Endothelial cell of umbilical vein (primary cell): ENCODE measurements at regions of chr1 and their contacts with region 1.

Region 1: GRCh38 chr1:52002038-52002917 is 11.8 kb upstream of the RAB3B start:
- DNase-seq: peak; percentile 89
- H3K4me3 ChIP-seq: no peak overlapping the region
- H3K27ac ChIP-seq: no peak overlapping the region
- H3K4me1 ChIP-seq: no peaks in the 10 kb centered on the region
- H3K27me3 ChIP-seq: peaks cover under 1 to 3% of the 10 kb centered on the region in 2 experiments
- CTCF ChIP-seq: peak; percentile 82 to 91
- POLR2A ChIP-seq: no peak

Region 2: GRCh38 chr1:51627678-51628077 is 374.6 kb before region 1 on chr1:
- CTCF ChIA-PET with region 1: no interaction called
- POLR2A ChIA-PET with region 1: no interaction called
- dilution Hi-C with region 1: no loop called
- intact Hi-C with region 1: loop called (anchors 1 kb)
- DNase-seq: peak; percentile 65
- H3K4me3 ChIP-seq: no peak overlapping the region
- H3K27ac ChIP-seq: no peak overlapping the region
- H3K4me1 ChIP-seq: no peaks in the 10 kb centered on the region
- H3K27me3 ChIP-seq: no peaks in the 10 kb centered on the region
- CTCF ChIP-seq: peak; percentile 30 to 35
- POLR2A ChIP-seq: no peak

Region 3: DNA sequence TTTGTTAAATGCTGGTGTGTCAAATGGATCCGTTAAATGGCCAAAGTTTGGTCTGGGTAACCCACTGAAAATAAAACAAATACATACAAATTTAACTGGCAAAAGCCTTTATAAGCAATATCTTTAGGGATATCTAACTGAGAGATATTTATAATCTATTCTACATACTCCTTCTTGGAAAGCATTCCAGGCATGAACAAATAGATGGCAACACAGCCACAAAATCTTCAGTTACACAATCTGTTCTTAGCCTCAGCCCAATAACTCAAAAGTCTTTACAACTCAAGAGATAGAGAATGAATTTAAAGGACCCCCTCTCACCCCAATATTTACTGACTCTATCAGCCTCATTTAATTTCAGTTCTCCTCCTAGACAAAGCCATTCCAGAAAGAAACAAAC is 182.5 kb before region 1 on chr1:
- CTCF ChIA-PET with region 1: no interaction called
- POLR2A ChIA-PET with region 1: no interaction called
- dilution Hi-C with region 1: no loop called
- intact Hi-C with region 1: loop called (anchors 10 kb)
- DNase-seq: no peak
- H3K4me3 ChIP-seq: no peak overlapping the region
- H3K27ac ChIP-seq: no peak overlapping the region
- H3K4me1 ChIP-seq: no peaks in the 10 kb centered on the region
- H3K27me3 ChIP-seq: no peaks in the 10 kb centered on the region
- CTCF ChIP-seq: no peak
- POLR2A ChIP-seq: no peak

Region 4: DNA sequence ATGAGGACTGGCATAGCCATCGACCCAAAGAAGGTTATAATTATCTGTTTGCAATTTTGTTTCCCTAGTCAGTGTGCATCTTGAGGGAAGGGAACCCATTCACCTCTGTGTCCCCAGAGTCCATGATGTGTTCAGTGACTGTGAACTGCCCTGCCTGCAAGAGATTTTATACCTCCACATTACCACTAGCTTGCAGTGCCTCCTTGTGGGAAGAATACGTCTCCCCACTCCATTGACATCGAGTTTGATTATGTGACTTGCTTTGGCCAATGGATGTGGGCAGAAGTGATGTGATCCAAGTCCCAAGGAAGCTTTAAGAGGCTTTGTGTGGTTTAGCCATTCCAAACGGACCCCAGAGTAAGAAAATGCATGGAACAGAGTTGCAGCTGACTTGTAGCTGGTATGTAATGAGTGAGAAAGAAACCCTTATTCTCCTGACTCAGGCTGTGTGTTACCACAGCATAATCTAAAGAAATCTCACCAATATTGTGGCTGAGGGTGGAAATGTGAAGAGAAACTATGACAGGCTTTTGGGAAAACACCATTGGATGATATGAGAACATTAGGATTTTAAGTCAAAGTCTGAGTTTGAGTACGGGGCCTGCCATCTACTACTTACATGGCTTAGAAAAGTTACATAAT is 76.0 kb before region 1 on chr1:
- CTCF ChIA-PET with region 1: interaction called, 3 read pairs
- POLR2A ChIA-PET with region 1: interaction called, 3 read pairs
- dilution Hi-C with region 1: no loop called
- intact Hi-C with region 1: loop called (anchors 1 kb)
- DNase-seq: peak; percentile 52
- H3K4me3 ChIP-seq: no peak overlapping the region
- H3K27ac ChIP-seq: no peak overlapping the region
- H3K4me1 ChIP-seq: no peaks in the 10 kb centered on the region
- H3K27me3 ChIP-seq: no peaks in the 10 kb centered on the region
- CTCF ChIP-seq: peak; percentile 37 to 53
- POLR2A ChIP-seq: no peak

Region 5: DNA sequence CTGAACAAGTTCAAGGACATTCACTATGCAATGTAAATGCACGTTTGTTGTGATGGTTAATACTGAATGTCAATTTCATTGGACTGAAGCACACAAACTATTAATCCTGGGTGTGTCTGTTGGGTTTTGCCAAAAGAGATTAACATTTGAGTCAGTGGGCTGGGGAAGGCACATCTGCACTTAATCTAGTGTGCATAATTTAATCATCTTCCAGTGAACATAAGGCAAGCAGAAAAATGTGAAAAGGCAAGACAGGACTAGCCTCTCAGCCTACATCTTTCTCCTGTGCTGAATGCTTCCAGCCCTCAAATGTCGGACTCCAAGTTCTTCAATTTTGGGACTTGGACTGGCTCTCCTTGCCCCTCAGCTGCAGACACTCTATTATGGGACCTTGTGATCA is 442.2 kb after region 1 on chr1:
- CTCF ChIA-PET with region 1: no interaction called
- POLR2A ChIA-PET with region 1: no interaction called
- dilution Hi-C with region 1: no loop called
- intact Hi-C with region 1: no loop called
- DNase-seq: no peak
- H3K4me3 ChIP-seq: no peak overlapping the region
- H3K27ac ChIP-seq: no peak overlapping the region
- H3K4me1 ChIP-seq: no peaks in the 10 kb centered on the region
- H3K27me3 ChIP-seq: no peaks in the 10 kb centered on the region
- CTCF ChIP-seq: no peak
- POLR2A ChIP-seq: no peak